OCI-LY7 (cell line): ENCODE measurements at regions of chr3 and their contacts with region 1.

Region 1: DNA sequence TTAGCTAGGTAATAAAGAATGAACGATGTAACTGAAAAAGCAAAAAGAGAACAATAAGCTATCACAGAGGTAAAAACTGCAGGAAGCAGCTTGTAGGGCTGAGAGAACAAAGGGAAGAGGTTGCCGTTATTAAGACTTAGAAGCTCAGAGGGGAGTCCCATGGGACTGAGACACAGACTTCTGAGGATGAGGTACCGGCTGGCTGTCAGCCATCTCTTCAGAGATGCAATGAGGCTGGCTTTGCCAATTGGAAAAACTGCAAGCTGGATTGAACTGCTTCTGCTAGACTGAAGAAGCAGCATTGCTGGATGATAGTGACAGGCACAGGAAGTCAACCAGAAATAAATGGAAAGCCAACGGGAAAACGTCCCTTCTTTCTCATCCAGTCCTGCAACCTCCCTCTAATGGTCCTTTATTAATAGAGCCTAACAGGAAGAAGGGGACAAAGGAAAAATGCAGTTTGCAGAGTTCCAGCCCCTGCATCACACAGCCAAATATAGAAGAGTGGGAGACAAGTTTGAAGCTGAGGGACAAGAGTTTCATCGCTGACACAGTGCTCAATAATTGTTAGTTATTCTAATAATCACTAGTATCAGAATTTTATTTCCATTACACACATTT is 21.1 kb upstream of the KLHL6 start:
- DNase-seq: peak; percentile 97
- H3K4me3 ChIP-seq: peak overlapping the region; percentile 47
- H3K27ac ChIP-seq: peak overlapping the region; percentile 94
- H3K4me1 ChIP-seq: peaks cover 96% of the 10 kb centered on the region
- CTCF ChIP-seq: no peak

Region 2: DNA sequence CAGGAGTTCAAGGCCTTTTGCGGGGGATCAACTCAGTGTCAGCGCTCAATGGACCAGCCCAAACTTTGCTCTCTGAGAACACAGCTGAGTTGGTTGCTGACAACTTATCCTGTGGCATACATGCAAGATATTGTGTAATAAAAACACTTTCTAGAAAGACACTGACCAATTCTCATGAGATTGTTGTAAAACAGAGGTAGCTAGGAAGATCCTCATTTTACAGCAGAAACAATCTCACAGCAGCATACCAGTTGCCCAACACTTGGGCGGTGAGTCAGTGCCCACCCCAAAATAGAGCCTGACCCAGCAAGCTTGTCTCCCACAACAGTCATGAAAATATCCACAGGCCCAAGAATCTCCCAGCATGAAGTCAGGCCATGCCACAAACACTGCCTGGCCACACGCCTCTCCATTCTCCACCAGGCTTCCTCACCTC is 39.3 kb before region 1 on chr3:
- CTCF ChIA-PET with region 1: no interaction called
- POLR2A ChIA-PET with region 1: interaction called, 12 read pairs
- intact Hi-C with region 1: no loop called
- DNase-seq: no peak
- H3K4me3 ChIP-seq: peak overlapping the region; percentile 57
- H3K27ac ChIP-seq: peak overlapping the region; percentile 74
- H3K4me1 ChIP-seq: peaks cover 98% of the 10 kb centered on the region
- CTCF ChIP-seq: no peak

Region 3: DNA sequence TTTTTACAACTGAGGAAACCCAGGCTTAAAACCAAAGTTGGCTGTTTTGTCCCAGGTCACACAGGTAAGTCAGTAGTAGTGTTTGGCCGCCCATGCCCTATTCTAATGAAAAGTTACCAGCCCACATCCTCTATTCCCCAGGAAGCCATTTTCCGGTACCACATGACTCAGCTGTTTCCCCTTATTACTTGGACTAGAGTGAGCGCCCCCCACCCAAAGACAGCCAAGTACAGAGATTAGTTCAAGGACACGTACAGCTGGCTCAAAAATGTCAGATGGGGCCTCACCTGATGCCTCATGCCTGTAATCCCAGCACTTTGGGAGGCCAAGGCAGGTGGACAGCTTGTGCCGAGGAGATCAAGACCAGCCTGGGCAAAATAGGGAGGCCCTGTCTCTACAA is 12.6 kb before region 1 on chr3:
- CTCF ChIA-PET with region 1: interaction called, 4 read pairs
- POLR2A ChIA-PET with region 1: interaction called, 26 read pairs
- intact Hi-C with region 1: no loop called
- DNase-seq: peak; percentile 51
- H3K4me3 ChIP-seq: peak overlapping the region; percentile 1
- H3K27ac ChIP-seq: peak overlapping the region; percentile 75
- H3K4me1 ChIP-seq: peaks cover 90% of the 10 kb centered on the region
- CTCF ChIP-seq: peak; percentile 26; the same call in 1 of the 2 replicates